ENCODE measurements at regions of chr17 and their contacts with region 1.

Region 1: GRCh38 chr17:81601525-81602120 is 35.3 kb downstream of the NPLOC4 start:
- DNase-seq: peak in 12 of 14 experiments; percentile 10 to 80 (median 26)
- ATAC-seq: peak; percentile 98
- H3K4me3 ChIP-seq: no peak overlapping the region
- H3K4me3 Mint-ChIP-seq: no peak overlapping the region
- H3K27ac ChIP-seq: no peak overlapping the region
- H3K27ac Mint-ChIP-seq: no peak overlapping the region
- H3K4me1 ChIP-seq: peaks cover 3% of the 10 kb centered on the region
- H3K4me1 Mint-ChIP-seq: peaks cover 6% of the 10 kb centered on the region
- H3K27me3 ChIP-seq: no peaks in the 10 kb centered on the region
- H3K27me3 Mint-ChIP-seq: no peaks in the 10 kb centered on the region
- CTCF ChIP-seq: peak; percentile 84

Region 2: GRCh38 chr17:81142301-81143199 is 459.1 kb before region 1 on chr17:
- CTCF ChIA-PET with region 1: no interaction called
- POLR2A ChIA-PET with region 1: no interaction called
- intact Hi-C with region 1: loop called in 1 of 2 experiments (anchors 2 kb)
- DNase-seq: peak; percentile 35 to 78 (median 56)
- ATAC-seq: peak; percentile 73
- H3K4me3 ChIP-seq: no peak overlapping the region
- H3K4me3 Mint-ChIP-seq: no peak overlapping the region
- H3K27ac ChIP-seq: no peak overlapping the region
- H3K27ac Mint-ChIP-seq: no peak overlapping the region
- H3K4me1 ChIP-seq: no peaks in the 10 kb centered on the region
- H3K4me1 Mint-ChIP-seq: no peaks in the 10 kb centered on the region
- H3K27me3 ChIP-seq: peaks cover 0 to 3% of the 10 kb centered on the region in 2 experiments
- H3K27me3 Mint-ChIP-seq: no peaks in the 10 kb centered on the region
- CTCF ChIP-seq: peak; percentile 53

Region 3: GRCh38 chr17:81519284-81519955 is 82.2 kb before region 1 on chr17:
- CTCF ChIA-PET with region 1: interaction called, 24 read pairs
- POLR2A ChIA-PET with region 1: interaction called, 4 read pairs
- intact Hi-C with region 1: loop called (anchors 1 kb)
- DNase-seq: peak; percentile 54 to 90 (median 68)
- ATAC-seq: peak; percentile 78
- H3K4me3 ChIP-seq: peak overlapping the region; percentile 48
- H3K4me3 Mint-ChIP-seq: no peak overlapping the region
- H3K27ac ChIP-seq: no peak overlapping the region
- H3K27ac Mint-ChIP-seq: no peak overlapping the region
- H3K4me1 ChIP-seq: peaks cover 47% of the 10 kb centered on the region
- H3K4me1 Mint-ChIP-seq: peaks cover 24% of the 10 kb centered on the region
- H3K27me3 ChIP-seq: peaks cover 8 to 13% of the 10 kb centered on the region in 2 experiments
- H3K27me3 Mint-ChIP-seq: no peaks in the 10 kb centered on the region
- CTCF ChIP-seq: peak; percentile 89